ENCODE measurements at regions of chr5 and their contacts with region 1.

Region 1: DNA sequence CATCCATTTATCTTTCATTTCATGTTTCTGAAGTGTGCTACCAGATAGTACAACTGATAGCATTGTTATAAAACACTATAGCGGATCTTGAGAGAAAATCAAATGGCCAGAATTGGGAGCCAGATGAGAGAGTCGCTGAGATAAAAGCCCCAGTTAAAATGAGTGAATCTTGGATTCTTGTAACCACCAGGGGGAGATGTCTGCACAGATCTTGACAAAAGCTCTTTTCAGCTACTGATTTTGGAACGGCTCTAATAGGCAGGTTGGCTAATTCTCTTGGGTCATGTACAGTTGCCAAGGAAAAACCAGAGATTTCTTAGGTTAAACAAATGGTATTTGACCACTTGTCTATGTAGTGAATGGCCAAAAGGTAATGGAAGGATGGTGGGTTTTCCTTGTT is 21.7 kb downstream of the F2RL2 start:
- DNase-seq: no peak
- ATAC-seq: peak; percentile 81
- H3K4me3 ChIP-seq: no peak overlapping the region
- H3K27ac ChIP-seq: no peak overlapping the region
- H3K4me1 ChIP-seq: no peaks in the 10 kb centered on the region
- H3K27me3 ChIP-seq: no peaks in the 10 kb centered on the region

Region 2: DNA sequence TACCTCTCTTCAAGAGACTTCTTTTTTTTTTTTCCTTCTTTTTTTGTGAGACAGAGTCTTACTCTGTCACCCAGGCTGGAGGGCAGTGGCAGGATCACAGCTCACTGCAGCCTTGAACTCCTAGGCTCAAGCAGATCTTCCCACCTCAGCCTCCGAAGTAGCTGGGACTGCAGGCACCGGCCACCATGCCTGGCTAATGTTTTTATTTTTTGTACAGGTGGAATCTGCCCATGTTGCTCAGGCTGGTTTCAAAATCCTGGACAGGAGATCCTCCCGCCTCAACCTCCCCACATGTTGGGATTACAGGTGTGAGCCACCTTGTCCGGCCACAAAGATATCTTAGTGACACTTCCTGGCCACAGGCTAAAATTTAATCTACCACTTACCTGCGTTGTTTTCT is 174.5 kb after region 1 on chr5:
- intact Hi-C with region 1: loop called (anchors 2 to 5 kb)
- DNase-seq: peak in 1 of 2 donors; percentile 51
- ATAC-seq: no peak
- H3K4me3 ChIP-seq: no peak overlapping the region
- H3K27ac ChIP-seq: no peak overlapping the region
- H3K4me1 ChIP-seq: no peaks in the 10 kb centered on the region
- H3K27me3 ChIP-seq: no peaks in the 10 kb centered on the region

Region 3: GRCh38 chr5:77015938-77016569 is 414.6 kb after region 1 on chr5:
- intact Hi-C with region 1: loop called (anchors 2 to 5 kb)
- DNase-seq: no peak
- ATAC-seq: no peak
- H3K4me3 ChIP-seq: no peak overlapping the region
- H3K27ac ChIP-seq: no peak overlapping the region
- H3K4me1 ChIP-seq: no peaks in the 10 kb centered on the region
- H3K27me3 ChIP-seq: peaks cover 0 to 2% of the 10 kb centered on the region in 2 donors

Measured in aorta (tissue), 5 donors.